PC-9 (cell line): ENCODE measurements at regions of chr18 and their contacts with region 1.

Region 1: GRCh38 chr18:55869556-55870501 is 281.8 kb upstream of the TCF4 start:
- DNase-seq: no peak
- H3K4me3 ChIP-seq: no peak overlapping the region
- H3K27ac ChIP-seq: no peak overlapping the region
- H3K4me1 ChIP-seq: no peaks in the 10 kb centered on the region
- H3K27me3 ChIP-seq: no peaks in the 10 kb centered on the region
- CTCF ChIP-seq: no peak

Region 2: GRCh38 chr18:55343396-55344073 is 526.3 kb before region 1 on chr18:
- CTCF ChIA-PET with region 1: no interaction called
- POLR2A ChIA-PET with region 1: no interaction called
- intact Hi-C with region 1: loop called (anchors 5 kb)
- DNase-seq: no peak
- H3K4me3 ChIP-seq: no peak overlapping the region
- H3K27ac ChIP-seq: no peak overlapping the region
- H3K4me1 ChIP-seq: no peaks in the 10 kb centered on the region
- H3K27me3 ChIP-seq: no peaks in the 10 kb centered on the region
- CTCF ChIP-seq: peak; percentile 66

Region 3: GRCh38 chr18:55781481-55781957 is 88.3 kb before region 1 on chr18:
- CTCF ChIA-PET with region 1: no interaction called
- POLR2A ChIA-PET with region 1: no interaction called
- intact Hi-C with region 1: no loop called
- DNase-seq: peak in 1 of 2 experiments; percentile 41
- H3K4me3 ChIP-seq: no peak overlapping the region
- H3K27ac ChIP-seq: no peak overlapping the region
- H3K4me1 ChIP-seq: no peaks in the 10 kb centered on the region
- H3K27me3 ChIP-seq: no peaks in the 10 kb centered on the region
- CTCF ChIP-seq: peak; percentile 47